Activated B cell treated with CpG ODN at 0.5 μM for 24 hours (primary cell): ENCODE measurements at regions of chr5 and their contacts with region 1.

Region 1: DNA sequence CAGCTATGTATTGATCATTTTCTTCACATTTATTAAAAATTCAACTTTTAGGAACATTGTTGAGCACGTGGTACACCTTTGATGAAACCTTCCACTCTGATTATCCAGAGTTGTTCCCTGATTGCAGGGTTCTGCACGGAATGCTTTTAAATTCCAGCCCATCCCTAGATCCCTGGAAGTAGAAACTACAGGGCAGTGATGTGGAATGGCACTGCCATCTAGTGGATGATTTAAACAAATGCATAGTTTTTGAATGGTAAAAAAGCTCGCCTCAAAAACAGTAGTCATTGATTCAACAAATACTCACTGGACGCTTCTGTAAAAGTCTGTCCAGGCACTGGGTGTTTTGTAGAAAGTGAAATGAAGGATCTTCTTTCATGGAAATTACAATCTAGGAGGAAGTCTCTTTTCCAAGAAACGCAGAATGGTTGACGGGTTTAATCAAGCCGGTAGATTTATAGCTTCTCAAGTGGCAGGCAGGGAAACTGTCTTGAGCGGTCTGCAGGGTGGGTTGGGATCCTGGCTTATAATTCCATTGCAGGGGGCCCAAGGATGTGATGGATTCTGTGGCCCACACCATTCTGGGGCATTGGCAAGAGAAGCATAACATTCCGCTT is 118.4 kb downstream of the ARHGAP26 start:
- DNase-seq: no peak
- ATAC-seq: no peak
- H3K4me3 Mint-ChIP-seq: no peak overlapping the region
- H3K27ac Mint-ChIP-seq: no peak overlapping the region
- H3K4me1 Mint-ChIP-seq: no peaks in the 10 kb centered on the region
- H3K27me3 Mint-ChIP-seq: no peaks in the 10 kb centered on the region
- CTCF ChIP-seq: peak; percentile 67

Region 2: GRCh38 chr5:142611154-142611553 is 277.4 kb before region 1 on chr5:
- CTCF ChIA-PET with region 1: interaction called, 3 read pairs
- POLR2A ChIA-PET with region 1: no interaction called
- intact Hi-C with region 1: loop called (anchors 1 kb)
- DNase-seq: peak; percentile 29
- ATAC-seq: peak; percentile 77
- H3K4me3 Mint-ChIP-seq: no peak overlapping the region
- H3K27ac Mint-ChIP-seq: no peak overlapping the region
- H3K4me1 Mint-ChIP-seq: peaks cover 2% of the 10 kb centered on the region
- H3K27me3 Mint-ChIP-seq: peaks cover 19% of the 10 kb centered on the region
- CTCF ChIP-seq: no peak

Region 3: DNA sequence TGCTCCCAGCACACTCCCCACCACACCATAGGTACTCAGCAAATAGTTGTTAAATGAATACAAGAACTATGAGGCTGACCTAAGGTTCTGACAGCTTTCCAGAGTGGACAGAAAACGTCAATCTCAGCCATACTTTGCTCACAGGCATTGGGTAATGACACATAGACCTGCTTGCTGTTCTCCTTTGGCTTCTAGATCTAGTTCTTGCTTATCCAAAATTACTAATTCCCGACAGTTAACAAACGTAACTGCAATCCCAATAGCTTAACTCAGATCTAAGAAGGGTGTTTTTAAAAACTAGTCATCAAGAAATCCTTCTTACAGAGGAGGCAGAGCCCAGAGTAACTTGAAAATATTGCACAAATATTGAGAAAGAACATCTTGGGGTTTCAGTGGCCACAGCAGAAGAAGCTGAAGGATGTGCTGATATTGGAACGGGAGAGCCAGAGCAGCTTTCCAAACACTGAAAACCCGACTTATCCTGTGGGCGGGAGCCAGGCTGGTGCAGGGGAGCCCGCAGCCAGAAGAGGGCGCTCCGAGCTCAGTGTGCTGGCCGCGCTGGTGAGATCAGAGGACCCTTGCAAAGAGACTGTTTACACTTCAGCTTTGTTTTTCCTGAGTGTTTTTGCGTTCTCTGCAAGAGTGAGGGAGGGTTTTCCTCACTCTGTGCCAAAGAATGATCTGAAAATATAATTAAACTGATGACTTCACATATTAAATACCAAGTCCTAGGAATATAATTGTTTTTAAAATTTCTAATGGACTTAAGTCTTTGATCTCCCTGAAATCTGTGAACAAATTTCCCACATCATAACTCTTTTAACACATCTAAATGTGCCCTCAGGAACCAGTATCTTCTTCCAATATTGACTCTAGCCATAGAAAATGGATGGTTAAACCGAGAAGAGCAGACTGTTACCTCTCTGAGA is 233.0 kb before region 1 on chr5:
- CTCF ChIA-PET with region 1: interaction called, 23 read pairs
- POLR2A ChIA-PET with region 1: interaction called, 4 read pairs
- intact Hi-C with region 1: loop called (anchors 1 kb)
- DNase-seq: peak; percentile 48
- ATAC-seq: peak; percentile 56
- H3K4me3 Mint-ChIP-seq: no peak overlapping the region
- H3K27ac Mint-ChIP-seq: no peak overlapping the region
- H3K4me1 Mint-ChIP-seq: no peaks in the 10 kb centered on the region
- H3K27me3 Mint-ChIP-seq: peaks cover 21% of the 10 kb centered on the region
- CTCF ChIP-seq: peak; percentile 72